Left cardiac atrium (tissue), 4 donors: ENCODE measurements at regions of chr6 and their contacts with region 1.

Region 1: GRCh38 chr6:74971633-74972032 is 234.2 kb downstream of the COL12A1 start:
- DNase-seq: no peak
- ATAC-seq: no peak

Region 2: DNA sequence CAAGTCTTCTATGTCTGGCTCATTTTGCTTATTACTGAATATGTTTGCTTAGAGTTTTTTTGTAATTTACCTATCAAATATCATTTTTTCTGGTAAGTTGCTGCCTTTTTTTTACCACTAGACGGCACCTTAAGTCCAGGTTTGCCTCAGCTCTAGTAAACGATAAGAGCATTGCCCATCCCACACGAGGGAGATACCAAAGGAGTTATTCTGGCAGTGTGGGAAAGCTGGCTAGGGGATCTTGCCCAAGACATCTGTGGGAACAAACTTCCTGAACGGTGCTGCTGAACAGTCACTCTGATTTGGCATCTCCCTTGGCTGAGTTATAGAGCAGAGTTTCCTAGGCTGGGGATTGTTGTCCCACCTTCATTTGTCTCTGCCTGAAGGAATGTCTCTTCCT is 72.2 kb before region 1 on chr6:
- intact Hi-C with region 1: loop called in 1 of 2 experiments (anchors 10 kb)
- DNase-seq: no peak
- ATAC-seq: no peak

Region 3: DNA sequence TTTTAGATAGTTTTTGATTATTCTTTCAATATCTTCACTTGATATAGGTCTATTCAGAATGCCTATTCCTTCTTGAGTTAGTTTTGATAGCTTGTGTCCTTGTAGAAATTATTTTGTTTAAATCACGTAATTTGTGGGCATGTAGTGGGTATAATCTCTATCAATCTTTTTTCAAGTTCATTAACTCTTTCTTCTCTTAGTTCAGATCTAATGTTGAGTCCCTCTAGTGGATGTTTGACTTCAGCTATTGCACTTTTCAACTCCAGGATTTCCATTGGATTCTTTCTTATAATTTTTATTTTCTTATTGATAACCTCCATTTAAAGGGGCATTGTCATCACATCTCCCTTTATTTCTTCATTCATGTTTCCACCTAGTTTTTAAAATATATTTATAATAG is 98.6 kb after region 1 on chr6:
- intact Hi-C with region 1: no loop called
- DNase-seq: no peak
- ATAC-seq: no peak